Mammary epithelial cell (primary cell): ENCODE measurements at regions of chr17 and their contacts with region 1.

Region 1: GRCh38 chr17:63634163-63634562 is 11.9 kb downstream of the MAP3K3 start:
- DNase-seq: no peak
- H3K4me3 ChIP-seq: no peak overlapping the region
- H3K27ac ChIP-seq: no peak overlapping the region
- H3K4me1 ChIP-seq: no peaks in the 10 kb centered on the region
- H3K27me3 ChIP-seq: no peaks in the 10 kb centered on the region
- CTCF ChIP-seq: no peak

Region 2: DNA sequence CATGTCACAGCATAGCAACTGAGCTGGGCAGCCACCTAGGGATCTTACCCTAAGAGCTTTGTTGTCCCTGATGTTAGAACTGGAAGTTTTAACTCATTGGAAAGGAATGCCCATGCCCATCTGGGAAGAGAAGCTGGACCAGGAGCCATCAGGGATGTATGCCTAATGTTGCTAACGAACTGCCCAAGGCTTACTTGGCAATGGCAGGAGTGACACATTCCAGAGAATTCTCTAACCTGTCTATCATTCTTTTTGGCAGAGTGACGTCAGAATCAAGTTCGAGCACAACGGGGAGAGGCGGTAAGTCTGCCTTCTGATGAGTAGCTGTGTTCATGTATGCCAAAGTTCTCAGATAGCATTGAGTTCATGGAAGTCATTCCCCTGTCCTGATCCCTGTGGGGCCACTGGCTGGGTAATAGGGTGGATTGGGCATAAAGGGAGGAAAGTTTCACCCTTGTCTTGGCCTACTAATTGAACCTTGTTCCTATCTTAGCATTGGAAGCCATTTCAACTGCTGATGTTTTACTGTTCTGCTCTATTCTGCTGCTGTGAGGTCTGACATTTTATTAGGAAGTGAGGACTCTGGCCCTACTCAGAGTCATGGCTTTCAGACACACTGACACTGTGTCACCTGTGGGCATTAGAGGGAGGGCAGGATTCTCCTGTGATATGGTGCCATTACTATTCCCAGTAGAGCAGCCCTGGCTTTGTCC is 11.8 kb after region 1 on chr17:
- CTCF ChIA-PET with region 1: no interaction called
- dilution Hi-C with region 1: no loop called
- in situ Hi-C with region 1: no loop called
- intact Hi-C with region 1: loop called (anchors 2 kb)
- DNase-seq: peak; percentile 75
- H3K4me3 ChIP-seq: no peak overlapping the region
- H3K27ac ChIP-seq: peak overlapping the region; percentile 30
- H3K4me1 ChIP-seq: peaks cover 30% of the 10 kb centered on the region
- H3K27me3 ChIP-seq: no peaks in the 10 kb centered on the region
- CTCF ChIP-seq: no peak